ENCODE measurements at regions of chr19 and their contacts with region 1.

Region 1: GRCh38 chr19:51441410-51442390 is 16.6 kb downstream of the SIGLEC8 start:
- DNase-seq: peak; percentile 91
- ATAC-seq: peak; percentile 94
- H3K4me3 ChIP-seq: peak overlapping the region; percentile 49; the same call in 1 of the 2 replicates
- H3K27ac ChIP-seq: no peak overlapping the region
- H3K4me1 ChIP-seq: peaks cover 27% of the 10 kb centered on the region
- H3K27me3 ChIP-seq: peaks cover 0 to 4% of the 10 kb centered on the region in 2 experiments; a peak in 2 of 4 replicates
- CTCF ChIP-seq: peak in 2 of 3 experiments; percentile 4 to 16; a peak in 2 of 6 replicates
- EP300 ChIP-seq: peak; percentile 56 to 73
- POLR2A ChIP-seq: no peak
- RAD21 ChIP-seq: no peak

Region 2: DNA sequence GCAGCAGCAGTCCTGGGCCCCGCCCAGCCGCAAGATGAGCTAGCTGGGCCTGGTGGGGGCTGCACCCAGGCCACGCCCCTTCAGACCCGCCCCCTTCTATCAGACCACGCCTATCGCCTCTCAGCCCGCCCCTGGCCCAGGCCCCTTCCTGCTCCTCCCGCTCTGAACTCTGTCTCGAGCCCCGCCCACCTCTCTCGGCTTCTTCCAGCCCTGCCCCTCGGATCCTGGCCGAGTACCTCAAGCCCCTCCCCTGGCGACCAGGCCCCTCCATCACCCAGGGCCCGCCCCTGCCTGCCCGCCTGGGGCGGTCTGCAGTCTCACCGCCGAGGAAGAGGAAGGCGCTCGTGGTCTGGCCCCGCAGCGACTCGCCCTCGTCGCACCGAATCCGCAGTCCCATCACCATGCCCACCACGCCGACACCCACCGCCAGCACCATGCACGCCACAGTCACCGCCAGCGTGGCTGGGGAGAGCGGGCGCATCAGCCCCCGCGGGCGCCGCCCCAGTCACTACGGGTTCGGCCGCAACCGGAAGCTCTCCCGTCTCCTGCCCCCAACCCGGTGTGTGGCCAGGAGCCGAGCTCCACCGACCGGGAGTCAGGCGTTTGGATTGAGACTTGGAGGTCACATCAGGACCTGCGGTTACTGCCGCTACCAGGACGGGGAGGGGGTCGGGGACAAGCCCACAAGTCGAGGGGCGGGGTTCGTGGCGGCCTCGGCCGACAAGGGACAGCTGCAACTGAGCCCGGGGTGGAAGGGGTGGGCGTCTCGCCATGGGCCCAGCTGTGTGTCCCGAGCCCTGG is 73.9 kb before region 1 on chr19:
- CTCF ChIA-PET with region 1: interaction called, 5 read pairs
- POLR2A ChIA-PET with region 1: interaction called, 10 read pairs
- RAD21 ChIA-PET with region 1: no interaction called
- SMC1A ChIA-PET with region 1: interaction called, 3 read pairs
- in situ Hi-C with region 1: no loop called
- intact Hi-C with region 1: no loop called
- DNase-seq: peak; percentile 96
- ATAC-seq: peak; percentile 88
- H3K4me3 ChIP-seq: peak overlapping the region; percentile 82
- H3K27ac ChIP-seq: peak overlapping the region; percentile 56
- H3K4me1 ChIP-seq: peaks cover 24% of the 10 kb centered on the region
- H3K27me3 ChIP-seq: no peaks in the 10 kb centered on the region
- CTCF ChIP-seq: no peak
- EP300 ChIP-seq: no peak
- POLR2A ChIP-seq: peak; percentile 87
- RAD21 ChIP-seq: no peak